GM12878 (cell line): ENCODE measurements at regions of chr3 and their contacts with region 1.

Region 1: GRCh38 chr3:365268-365667 is 168.7 kb downstream of the CHL1 start:
- DNase-seq: no peak
- ATAC-seq: peak; percentile 90
- H3K4me3 ChIP-seq: no peak overlapping the region
- H3K27ac ChIP-seq: no peak overlapping the region
- H3K4me1 ChIP-seq: no peaks in the 10 kb centered on the region
- H3K27me3 ChIP-seq: no peaks in the 10 kb centered on the region
- CTCF ChIP-seq: no peak
- EP300 ChIP-seq: no peak
- POLR2A ChIP-seq: no peak
- RAD21 ChIP-seq: no peak

Region 2: GRCh38 chr3:377158-377561 is 11.9 kb after region 1 on chr3:
- CTCF ChIA-PET with region 1: interaction called, 6 read pairs
- POLR2A ChIA-PET with region 1: no interaction called
- RAD21 ChIA-PET with region 1: interaction called, 4 read pairs
- SMC1A ChIA-PET with region 1: interaction called, 14 read pairs
- in situ Hi-C with region 1: no loop called
- intact Hi-C with region 1: no loop called
- DNase-seq: no peak
- ATAC-seq: peak; percentile 88
- H3K4me3 ChIP-seq: no peak overlapping the region
- H3K27ac ChIP-seq: no peak overlapping the region
- H3K4me1 ChIP-seq: no peaks in the 10 kb centered on the region
- H3K27me3 ChIP-seq: no peaks in the 10 kb centered on the region
- CTCF ChIP-seq: peak; percentile 17 to 65 (median 33); a peak in 2 of 6 replicates
- EP300 ChIP-seq: no peak
- POLR2A ChIP-seq: no peak
- RAD21 ChIP-seq: peak; percentile 61

Region 3: GRCh38 chr3:411226-411625 is 46.0 kb after region 1 on chr3:
- CTCF ChIA-PET with region 1: no interaction called
- POLR2A ChIA-PET with region 1: no interaction called
- RAD21 ChIA-PET with region 1: no interaction called
- SMC1A ChIA-PET with region 1: no interaction called
- in situ Hi-C with region 1: no loop called
- intact Hi-C with region 1: no loop called
- DNase-seq: no peak
- ATAC-seq: no peak; the same call in 2 of the 3 replicates
- H3K4me3 ChIP-seq: no peak overlapping the region
- H3K27ac ChIP-seq: no peak overlapping the region
- H3K4me1 ChIP-seq: no peaks in the 10 kb centered on the region
- H3K27me3 ChIP-seq: no peaks in the 10 kb centered on the region
- CTCF ChIP-seq: no peak
- EP300 ChIP-seq: no peak
- POLR2A ChIP-seq: no peak
- RAD21 ChIP-seq: no peak